Pancreas (tissue), 10 donors: ENCODE measurements at regions of chr19 and their contacts with region 1.

Region 1: GRCh38 chr19:33785795-33786194 is 10.9 kb upstream of the KCTD15 start:
- DNase-seq: no peak
- ATAC-seq: no peak
- H3K4me3 ChIP-seq: no peak overlapping the region
- H3K27ac ChIP-seq: no peak overlapping the region
- H3K4me1 ChIP-seq: no peaks in the 10 kb centered on the region
- H3K27me3 ChIP-seq: no peaks in the 10 kb centered on the region
- CTCF ChIP-seq: no peak

Region 2: GRCh38 chr19:33883859-33884519 is 98.2 kb after region 1 on chr19:
- intact Hi-C with region 1: no loop called
- DNase-seq: peak; percentile 64 to 93 (median 83)
- ATAC-seq: peak; percentile 81 to 90 (median 88)
- H3K4me3 ChIP-seq: peak overlapping the region in 2 of 4 donors; percentile 13 to 23
- H3K27ac ChIP-seq: peak overlapping the region; percentile 79 to 89 (median 82)
- H3K4me1 ChIP-seq: peaks cover 16 to 39% (median 30%) of the 10 kb centered on the region in 3 donors
- H3K27me3 ChIP-seq: no peaks in the 10 kb centered on the region
- CTCF ChIP-seq: no peak

Region 3: DNA sequence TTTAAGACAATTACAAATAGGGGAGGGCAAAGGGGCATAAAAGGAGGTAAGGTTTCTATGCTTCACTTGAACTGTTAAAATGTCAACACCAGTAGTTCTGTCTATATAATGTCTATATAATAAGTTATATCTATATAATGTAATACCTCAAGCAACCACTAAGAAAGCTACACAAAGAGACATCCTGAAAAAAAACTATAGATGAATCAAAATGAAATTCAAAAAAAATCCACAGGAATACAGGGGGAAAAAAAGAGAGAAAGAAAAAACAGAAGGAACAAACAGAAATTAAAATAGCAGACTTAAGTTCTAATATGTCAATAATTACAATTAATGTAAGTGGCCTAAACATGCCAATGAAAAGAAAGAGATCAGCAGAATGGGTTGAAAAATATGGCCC is 196.9 kb after region 1 on chr19:
- intact Hi-C with region 1: loop called in 1 of 3 experiments (anchors 10 kb)
- DNase-seq: no peak
- ATAC-seq: no peak
- H3K4me3 ChIP-seq: no peak overlapping the region
- H3K27ac ChIP-seq: no peak overlapping the region
- H3K4me1 ChIP-seq: no peaks in the 10 kb centered on the region
- H3K27me3 ChIP-seq: no peaks in the 10 kb centered on the region
- CTCF ChIP-seq: peak in 1 of 4 donors; percentile 26

Region 4: DNA sequence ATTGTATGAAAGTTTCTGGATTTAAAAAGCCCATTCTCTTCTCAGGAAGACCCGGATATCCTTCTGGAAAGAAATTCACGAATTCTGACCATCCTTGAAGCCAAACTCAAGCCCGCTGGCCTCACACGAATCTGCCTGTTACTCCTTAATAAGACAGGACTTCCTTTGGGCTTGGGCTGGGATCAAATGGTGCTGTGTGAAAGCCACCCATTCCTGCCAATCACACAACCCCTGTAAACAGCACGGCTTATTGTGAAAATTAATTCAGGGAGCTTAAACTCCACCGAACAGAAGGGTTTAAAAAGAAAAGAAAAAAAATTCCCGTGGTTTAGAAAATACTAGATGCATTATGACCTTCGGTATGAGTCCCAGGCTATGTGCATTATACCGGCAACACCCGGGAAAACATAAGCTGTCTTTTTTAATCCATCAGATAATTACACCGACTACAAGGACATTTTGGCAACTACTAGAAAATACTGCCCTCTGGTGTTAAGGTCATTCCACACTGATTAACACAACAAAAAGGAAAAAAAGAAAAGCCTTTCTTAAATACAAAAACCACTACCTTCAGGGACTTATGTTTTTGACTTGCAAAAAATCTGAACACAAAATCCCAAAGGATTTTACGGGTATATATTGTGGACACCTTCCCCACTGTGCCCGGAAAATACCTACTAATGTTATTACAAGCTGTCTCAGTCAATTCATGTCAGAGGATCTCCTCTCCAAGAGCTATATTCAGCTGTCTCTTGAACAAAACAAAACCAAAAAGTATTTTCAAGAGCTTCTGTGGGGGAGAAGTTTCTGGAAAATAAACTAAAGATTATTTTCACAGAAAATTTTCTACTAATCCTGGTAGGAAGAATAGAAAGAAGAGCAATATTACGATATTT is 310.5 kb after region 1 on chr19:
- intact Hi-C with region 1: loop called in 2 of 3 experiments (anchors 5 to 10 kb)
- DNase-seq: no peak
- ATAC-seq: peak; percentile 50 to 88 (median 80)
- H3K4me3 ChIP-seq: no peak overlapping the region
- H3K27ac ChIP-seq: no peak overlapping the region
- H3K4me1 ChIP-seq: no peaks in the 10 kb centered on the region
- H3K27me3 ChIP-seq: peaks cover 0 to 3% (median 0%) of the 10 kb centered on the region in 4 donors
- CTCF ChIP-seq: peak; percentile 16 to 47 (median 34)